ENCODE measurements at regions of chr7 and their contacts with region 1.

Region 1: GRCh38 chr7:154927624-154928143 is 75.2 kb downstream of the PAXIP1 start:
- DNase-seq: peak; percentile 88 to 94
- H3K4me3 ChIP-seq: peak overlapping the region; percentile 58 to 62 (median 60)
- H3K27ac ChIP-seq: peak overlapping the region; percentile 84 to 96 (median 93)
- H3K4me1 ChIP-seq: peaks cover 5 to 31% (median 19%) of the 10 kb centered on the region in 4 donors
- H3K27me3 ChIP-seq: no peaks in the 10 kb centered on the region
- CTCF ChIP-seq: peak in 5 of 7 experiments; percentile 32 to 65 (median 60)
- EP300 ChIP-seq: no peak
- POLR2A ChIP-seq: no peak

Region 2: GRCh38 chr7:155003376-155004214 is 75.9 kb after region 1 on chr7:
- intact Hi-C with region 1: loop called (anchors 10 kb)
- DNase-seq: peak; percentile 83 to 94
- H3K4me3 ChIP-seq: peak overlapping the region; percentile 86 to 99 (median 94)
- H3K27ac ChIP-seq: peak overlapping the region; percentile 89 to 96 (median 95)
- H3K4me1 ChIP-seq: peaks cover 13 to 37% (median 25%) of the 10 kb centered on the region in 4 donors
- H3K27me3 ChIP-seq: no peaks in the 10 kb centered on the region
- CTCF ChIP-seq: peak in 1 of 7 experiments; percentile 3
- EP300 ChIP-seq: no peak
- POLR2A ChIP-seq: peak in 1 of 4 donors; percentile 62

Region 3: DNA sequence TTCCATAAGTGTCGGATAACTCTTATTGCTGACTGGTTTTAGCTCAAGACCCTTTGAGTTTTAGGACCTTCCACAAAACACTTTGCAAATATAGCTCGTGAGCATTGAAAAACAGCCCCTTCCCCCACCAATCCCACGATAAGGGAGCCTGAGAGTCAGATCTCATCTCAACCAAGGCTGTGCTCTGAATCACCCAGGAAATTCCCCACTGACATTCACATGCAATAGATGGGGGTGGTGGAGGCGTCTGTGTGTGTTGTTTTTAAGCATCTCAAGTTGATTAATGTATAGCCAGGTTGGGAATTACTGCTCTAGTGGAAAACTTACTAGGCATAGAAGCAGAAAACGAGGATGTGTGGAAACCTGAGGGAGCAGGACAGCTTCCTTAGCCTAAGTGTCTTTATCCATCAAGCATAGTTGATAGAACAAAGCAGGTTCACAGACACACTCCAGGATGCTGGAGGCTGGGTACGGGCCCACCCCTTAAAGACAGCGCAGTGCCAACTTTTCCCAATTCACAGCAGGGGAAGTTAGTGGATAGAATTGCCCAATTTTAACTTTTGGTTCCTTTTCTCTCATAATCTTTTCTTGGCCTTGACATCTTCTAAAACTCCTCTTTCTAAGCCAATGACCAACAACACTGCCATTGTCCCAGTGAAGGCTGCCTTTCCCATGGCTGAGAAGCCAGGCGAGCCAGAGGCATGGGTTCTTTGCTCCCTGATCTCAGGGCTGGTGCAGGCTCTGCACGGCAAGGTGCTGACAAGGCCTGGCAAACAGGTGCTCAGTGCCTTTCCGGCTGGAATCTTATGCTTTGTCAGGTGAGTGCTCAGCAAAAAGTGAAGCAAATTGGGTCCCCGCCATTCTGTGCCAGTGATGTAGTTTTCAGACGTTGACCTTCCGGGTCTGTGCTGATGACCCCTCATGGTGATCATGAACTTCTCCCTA is 271.5 kb after region 1 on chr7:
- intact Hi-C with region 1: no loop called
- DNase-seq: no peak
- H3K4me3 ChIP-seq: no peak overlapping the region
- H3K27ac ChIP-seq: no peak overlapping the region
- H3K4me1 ChIP-seq: no peaks in the 10 kb centered on the region
- H3K27me3 ChIP-seq: peaks cover 0 to 14% (median 0%) of the 10 kb centered on the region in 3 donors
- CTCF ChIP-seq: no peak
- EP300 ChIP-seq: no peak
- POLR2A ChIP-seq: no peak

Measured in stomach (tissue), 19 donors.